Activated T-helper 1 cell treated with anti-CD3 and anti-CD28 coated beads, Interleukin-12 subunit alpha, Interleukin-12 subunit beta, Interleukin-2, Interleukin-4 antibody, amounts not matched to agents 30 ng/mL and 10 ng/mL and 1 ng/mL, durations not matched to agents 14 hours and 24 hours and 36 hours (primary cell): ENCODE measurements at regions of chr5 and their contacts with region 1.

Region 1: GRCh38 chr5:138542956-138543729 is at the start of gene ETF1:
- DNase-seq: peak; percentile 100
- H3K4me3 Mint-ChIP-seq: peak within 1 kb of the TSS; percentile 99
- H3K27ac Mint-ChIP-seq: peak within 1 kb of the TSS; percentile 100
- H3K4me1 Mint-ChIP-seq: peaks cover 54% of the 10 kb centered on the region
- H3K27me3 Mint-ChIP-seq: no peaks in the 10 kb centered on the region
- total RNA-seq, gene ETF1: 201 and 219 TPM in 2 replicates

Region 2: GRCh38 chr5:136750224-136750862 is 1792.8 kb before region 1 on chr5:
- intact Hi-C with region 1: no loop called
- DNase-seq: no peak
- H3K4me3 Mint-ChIP-seq: no peak overlapping the region
- H3K27ac Mint-ChIP-seq: no peak overlapping the region
- H3K4me1 Mint-ChIP-seq: no peaks in the 10 kb centered on the region
- H3K27me3 Mint-ChIP-seq: no peaks in the 10 kb centered on the region

Region 3: DNA sequence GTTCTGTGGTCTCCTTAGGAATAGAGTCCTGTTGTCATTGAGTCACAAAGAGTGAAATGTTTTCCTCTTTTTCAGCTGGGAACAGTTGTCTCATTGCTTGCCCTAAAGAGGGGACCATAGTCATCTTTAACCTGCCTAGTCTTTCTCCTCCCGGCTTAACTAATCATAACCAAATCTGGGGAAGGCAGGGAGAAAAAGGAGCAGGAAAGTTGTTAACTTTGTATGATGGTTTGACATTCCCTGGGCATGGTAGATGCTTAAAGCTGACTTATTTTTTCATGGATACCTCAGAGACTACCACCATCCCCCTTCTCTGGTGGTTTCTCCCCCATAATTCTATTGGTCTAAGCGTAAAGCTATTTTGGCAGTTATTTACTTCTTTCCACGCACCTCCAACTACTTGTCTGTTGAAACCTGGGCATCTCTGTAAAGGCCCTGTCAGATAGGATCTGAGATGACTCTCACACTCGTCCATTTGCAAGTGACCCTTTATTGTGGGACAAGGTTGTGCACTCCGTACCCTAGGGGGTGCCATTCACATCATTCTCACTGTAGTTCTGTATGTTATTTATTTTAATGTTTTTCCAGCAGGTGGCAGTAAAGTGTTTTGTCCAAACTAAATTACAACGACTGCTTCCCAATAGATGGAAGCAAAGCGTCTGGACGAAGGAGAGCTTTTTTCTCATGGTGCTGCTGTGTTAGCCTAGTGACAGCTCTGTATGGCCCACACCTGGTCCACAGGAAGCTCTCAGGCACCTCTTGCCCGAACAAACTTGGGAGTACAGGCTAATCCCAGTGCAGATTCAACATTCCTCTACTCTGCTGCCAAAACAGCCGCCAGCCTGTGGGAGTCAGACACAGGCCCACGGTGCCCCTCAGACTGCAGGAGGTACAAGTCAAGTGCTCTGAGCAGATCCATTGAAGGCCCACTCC is 507.3 kb before region 1 on chr5:
- intact Hi-C with region 1: loop called (anchors 1 kb)
- DNase-seq: peak; percentile 60
- H3K4me3 Mint-ChIP-seq: peak overlapping the region; percentile 38
- H3K27ac Mint-ChIP-seq: peak overlapping the region; percentile 72
- H3K4me1 Mint-ChIP-seq: peaks cover 46% of the 10 kb centered on the region
- H3K27me3 Mint-ChIP-seq: no peaks in the 10 kb centered on the region

Region 4: DNA sequence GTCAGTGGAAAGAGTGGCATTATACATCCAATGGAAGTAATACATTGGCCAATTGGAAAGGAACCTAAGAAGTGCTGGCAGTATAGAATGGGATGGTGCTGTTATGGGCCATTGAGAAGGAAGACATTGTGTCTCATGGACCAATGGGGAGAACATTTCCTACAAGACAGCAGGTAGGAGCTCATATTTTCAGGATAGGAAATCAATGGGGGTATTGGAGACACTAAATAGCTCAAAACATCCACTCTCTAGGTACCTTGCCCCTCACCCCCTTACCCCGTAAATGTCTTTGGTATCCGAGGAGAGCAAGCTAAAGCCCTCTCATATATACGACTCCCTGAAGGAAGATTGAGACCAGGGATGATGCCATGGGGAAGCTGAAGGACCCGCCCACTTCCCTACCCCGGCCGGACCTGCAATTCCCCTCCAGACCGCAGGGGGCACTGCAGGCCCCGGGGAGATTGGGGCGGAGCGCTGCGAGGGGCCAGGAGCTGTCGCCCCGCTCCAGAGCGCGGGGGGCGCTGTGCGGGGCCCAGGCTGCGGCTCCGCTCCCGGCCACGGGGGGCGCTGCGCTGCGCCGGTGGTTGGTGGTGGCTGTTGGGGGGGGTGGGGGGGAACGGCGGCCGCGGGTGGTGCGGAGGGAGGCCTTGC is 190.9 kb before region 1 on chr5 and contains the start of gene KDM3B:
- intact Hi-C with region 1: loop called (anchors 1 kb)
- DNase-seq: peak; percentile 93
- H3K4me3 Mint-ChIP-seq: peak within 1 kb of the TSS; percentile 100
- H3K27ac Mint-ChIP-seq: peak within 1 kb of the TSS; percentile 97
- H3K4me1 Mint-ChIP-seq: peaks cover 51% of the 10 kb centered on the region
- H3K27me3 Mint-ChIP-seq: peaks cover 3% of the 10 kb centered on the region
- total RNA-seq, gene KDM3B: 55.0 and 59.3 TPM in 2 replicates

Region 5: DNA sequence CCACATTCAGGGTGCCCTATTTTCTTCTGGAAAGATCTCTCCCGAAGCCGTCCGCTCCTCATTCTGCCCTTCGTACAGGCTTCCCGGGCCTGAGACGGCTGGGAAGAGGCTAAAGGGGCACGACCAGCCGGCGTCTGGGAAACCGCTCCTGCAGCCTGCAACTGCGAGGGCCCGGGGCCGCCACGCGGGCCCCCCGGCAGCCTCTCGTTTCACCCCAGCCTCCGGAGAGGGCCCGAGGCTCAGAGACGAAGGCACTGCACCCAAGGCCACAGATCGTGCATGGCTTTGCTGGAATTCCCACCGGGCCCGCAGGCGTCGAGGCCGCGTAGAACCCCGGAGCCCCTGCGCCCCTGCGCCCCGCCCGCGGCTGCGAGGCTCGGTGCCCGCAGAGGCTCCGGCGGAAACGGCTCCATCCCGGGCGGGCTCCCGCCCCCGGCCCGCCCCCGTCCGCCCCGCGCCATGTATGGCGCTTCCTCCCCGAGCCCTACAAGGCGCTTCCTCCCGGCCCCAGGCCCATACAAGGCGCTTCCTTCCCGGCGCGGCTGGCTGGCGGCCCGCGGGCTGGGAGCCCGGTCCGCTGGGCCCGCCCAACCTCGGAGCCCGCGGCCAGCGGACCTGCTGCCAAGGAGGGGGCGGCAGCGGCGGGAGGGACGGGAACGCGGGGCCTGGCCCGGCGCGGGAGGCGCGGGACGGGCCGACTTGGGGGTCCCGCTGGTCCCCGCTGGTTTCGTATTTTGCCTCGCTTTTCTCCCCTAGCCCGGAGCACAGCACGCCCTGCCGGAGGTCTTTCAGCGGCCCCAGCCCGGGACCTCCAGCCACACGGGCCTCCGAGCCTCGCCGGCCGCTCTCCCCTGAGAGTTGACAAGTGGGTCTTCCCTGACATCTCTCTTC is 51.2 kb before region 1 on chr5:
- intact Hi-C with region 1: loop called (anchors 1 kb)
- DNase-seq: peak; percentile 83
- H3K4me3 Mint-ChIP-seq: peak overlapping the region; percentile 89
- H3K27ac Mint-ChIP-seq: peak overlapping the region; percentile 68
- H3K4me1 Mint-ChIP-seq: peaks cover 8% of the 10 kb centered on the region
- H3K27me3 Mint-ChIP-seq: peaks cover 34% of the 10 kb centered on the region

Region 6: DNA sequence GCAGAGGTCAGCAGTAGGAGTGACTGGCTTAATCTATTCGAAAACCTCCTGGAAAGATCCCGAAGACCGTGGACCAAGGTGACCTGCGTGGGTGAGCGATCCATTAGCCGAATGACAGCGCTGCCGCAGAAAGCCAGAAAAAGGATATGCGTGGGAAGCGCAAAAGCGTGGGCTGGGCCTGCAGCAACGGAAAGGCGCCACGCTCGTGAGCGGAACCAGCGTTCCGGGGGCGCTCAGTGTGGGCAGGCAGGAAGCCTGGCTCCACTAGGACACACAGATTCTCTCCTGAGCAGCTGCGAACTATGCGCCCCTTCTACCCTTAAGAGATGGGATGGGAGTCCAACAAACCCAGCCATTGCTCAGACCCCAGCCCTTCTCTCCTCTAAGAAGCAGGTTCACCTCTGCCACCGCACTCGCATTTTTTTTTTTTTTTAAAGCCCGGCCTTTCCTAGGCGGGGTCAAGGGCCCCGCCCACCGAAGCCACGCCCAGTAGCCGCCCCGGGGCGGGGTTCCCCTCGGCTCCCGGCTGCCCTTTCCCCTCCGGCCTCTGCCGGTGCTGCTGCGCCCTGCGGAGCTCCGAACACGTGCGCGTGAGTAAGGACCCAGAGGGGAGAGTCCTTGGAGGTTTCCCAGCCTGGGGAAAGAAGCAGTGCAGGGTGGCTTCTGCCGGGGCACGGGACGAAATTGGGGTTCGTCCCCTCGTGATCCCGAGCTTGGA is 730.6 kb after region 1 on chr5:
- intact Hi-C with region 1: loop called (anchors 5 kb)
- DNase-seq: peak; percentile 85
- H3K4me3 Mint-ChIP-seq: peak overlapping the region; percentile 96
- H3K27ac Mint-ChIP-seq: peak overlapping the region; percentile 82
- H3K4me1 Mint-ChIP-seq: peaks cover 50% of the 10 kb centered on the region
- H3K27me3 Mint-ChIP-seq: peaks cover 9% of the 10 kb centered on the region